ENCODE measurements at regions of chr11 and their contacts with region 1.

Region 1: GRCh38 chr11:45964911-45965389 is 42.5 kb downstream of the LARGE2 start:
- DNase-seq: peak; percentile 86
- H3K4me3 ChIP-seq: no peak overlapping the region
- H3K27ac ChIP-seq: no peak overlapping the region
- H3K4me1 ChIP-seq: no peaks in the 10 kb centered on the region
- H3K27me3 ChIP-seq: no peaks in the 10 kb centered on the region
- CTCF ChIP-seq: peak; percentile 87 to 88
- POLR2A ChIP-seq: no peak

Region 2: GRCh38 chr11:45949992-45950407 is 14.9 kb before region 1 on chr11:
- CTCF ChIA-PET with region 1: interaction called, 52 read pairs
- POLR2A ChIA-PET with region 1: no interaction called
- dilution Hi-C with region 1: no loop called
- intact Hi-C with region 1: no loop called
- DNase-seq: no peak
- H3K4me3 ChIP-seq: no peak overlapping the region
- H3K27ac ChIP-seq: no peak overlapping the region
- H3K4me1 ChIP-seq: no peaks in the 10 kb centered on the region
- H3K27me3 ChIP-seq: no peaks in the 10 kb centered on the region
- CTCF ChIP-seq: no peak
- POLR2A ChIP-seq: no peak

Region 3: DNA sequence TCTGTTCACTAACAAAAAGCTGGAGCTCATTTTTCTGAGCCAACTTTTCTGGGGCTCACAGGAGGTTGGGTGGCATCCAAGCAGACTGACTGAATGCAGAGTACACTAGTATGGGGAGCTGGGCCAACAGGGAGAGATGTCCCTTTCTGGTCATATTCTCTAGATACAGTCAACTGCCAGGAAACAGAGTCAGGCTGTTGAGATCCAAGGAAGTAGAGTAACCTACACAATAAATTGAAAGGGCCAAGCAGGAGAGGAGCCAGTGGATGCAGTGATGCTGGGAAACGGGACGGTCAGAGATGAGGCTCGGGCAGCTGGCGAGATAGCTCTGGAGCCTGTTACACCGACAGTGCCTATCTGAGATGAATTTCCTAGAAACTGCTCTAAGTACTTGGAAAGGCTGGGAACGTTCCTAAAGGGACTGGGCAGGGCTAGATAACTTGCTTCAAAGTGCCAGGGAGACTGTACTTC is 28.6 kb after region 1 on chr11:
- CTCF ChIA-PET with region 1: interaction called, 20 read pairs
- POLR2A ChIA-PET with region 1: no interaction called
- dilution Hi-C with region 1: no loop called
- intact Hi-C with region 1: no loop called
- DNase-seq: no peak
- H3K4me3 ChIP-seq: no peak overlapping the region
- H3K27ac ChIP-seq: no peak overlapping the region
- H3K4me1 ChIP-seq: no peaks in the 10 kb centered on the region
- H3K27me3 ChIP-seq: no peaks in the 10 kb centered on the region
- CTCF ChIP-seq: no peak
- POLR2A ChIP-seq: no peak

Region 4: GRCh38 chr11:46121724-46122477 is 157.0 kb after region 1 on chr11:
- CTCF ChIA-PET with region 1: interaction called, 7 read pairs
- POLR2A ChIA-PET with region 1: no interaction called
- dilution Hi-C with region 1: no loop called
- intact Hi-C with region 1: loop called (anchors 5 kb)
- DNase-seq: peak; percentile 78
- H3K4me3 ChIP-seq: peak overlapping the region; percentile 87 to 95 (median 92)
- H3K27ac ChIP-seq: peak overlapping the region; percentile 20
- H3K4me1 ChIP-seq: peaks cover 14% of the 10 kb centered on the region
- H3K27me3 ChIP-seq: no peaks in the 10 kb centered on the region
- CTCF ChIP-seq: no peak
- POLR2A ChIP-seq: peak; percentile 20

Region 5: DNA sequence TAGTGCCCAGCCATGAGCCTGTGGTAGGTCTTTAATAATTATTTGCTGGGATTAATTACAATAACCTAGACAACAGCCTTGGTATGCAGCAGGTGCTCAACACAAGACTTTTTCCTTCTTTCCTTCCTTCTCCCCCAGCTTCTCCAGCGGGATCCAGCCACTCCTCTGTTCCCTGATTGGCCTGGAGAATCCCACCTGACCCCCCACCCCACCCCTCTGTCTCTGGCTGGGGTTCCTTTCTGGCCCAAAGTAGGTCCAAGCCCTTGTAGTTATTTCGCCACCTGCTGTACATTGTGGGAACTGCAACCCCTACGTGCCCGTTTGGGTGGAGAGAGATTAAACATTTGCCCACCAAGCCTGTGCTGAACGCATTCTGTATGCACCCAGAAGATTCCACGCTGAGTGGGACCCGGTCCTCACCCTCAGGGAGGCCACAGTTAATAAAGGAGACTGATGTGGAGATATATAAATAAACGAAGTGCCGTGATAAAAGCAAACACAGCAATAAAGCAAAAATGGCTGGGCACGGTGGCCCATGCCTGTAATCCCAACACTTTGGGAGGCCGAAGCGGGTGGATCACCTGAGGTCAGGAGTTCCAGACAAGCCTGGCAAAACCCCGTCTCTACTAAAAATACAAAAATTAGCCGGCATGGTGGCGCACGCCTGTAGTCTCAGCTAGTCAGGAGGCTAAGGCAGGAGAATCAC is 350.2 kb after region 1 on chr11:
- CTCF ChIA-PET with region 1: interaction called, 40 read pairs
- POLR2A ChIA-PET with region 1: no interaction called
- dilution Hi-C with region 1: no loop called
- intact Hi-C with region 1: loop called (anchors 2 kb)
- DNase-seq: peak; percentile 72
- H3K4me3 ChIP-seq: no peak overlapping the region
- H3K27ac ChIP-seq: no peak overlapping the region
- H3K4me1 ChIP-seq: peaks cover 8% of the 10 kb centered on the region
- H3K27me3 ChIP-seq: no peaks in the 10 kb centered on the region
- CTCF ChIP-seq: peak; percentile 76 to 86
- POLR2A ChIP-seq: no peak

Measured in endothelial cell of umbilical vein (primary cell).